Breast epithelium (tissue), 4 donors: ENCODE measurements at regions of chr21 and their contacts with region 1.

Region 1: GRCh38 chr21:41359289-41359688 is 2.5 kb upstream of the MX2 start:
- DNase-seq: peak; percentile 5 to 47
- H3K4me3 ChIP-seq: no peak overlapping the region
- H3K27ac ChIP-seq: no peak overlapping the region
- H3K4me1 ChIP-seq: peaks cover 0 to 6% of the 10 kb centered on the region in 2 donors
- H3K27me3 ChIP-seq: no peaks in the 10 kb centered on the region
- CTCF ChIP-seq: no peak
- POLR2A ChIP-seq: no peak

Region 2: DNA sequence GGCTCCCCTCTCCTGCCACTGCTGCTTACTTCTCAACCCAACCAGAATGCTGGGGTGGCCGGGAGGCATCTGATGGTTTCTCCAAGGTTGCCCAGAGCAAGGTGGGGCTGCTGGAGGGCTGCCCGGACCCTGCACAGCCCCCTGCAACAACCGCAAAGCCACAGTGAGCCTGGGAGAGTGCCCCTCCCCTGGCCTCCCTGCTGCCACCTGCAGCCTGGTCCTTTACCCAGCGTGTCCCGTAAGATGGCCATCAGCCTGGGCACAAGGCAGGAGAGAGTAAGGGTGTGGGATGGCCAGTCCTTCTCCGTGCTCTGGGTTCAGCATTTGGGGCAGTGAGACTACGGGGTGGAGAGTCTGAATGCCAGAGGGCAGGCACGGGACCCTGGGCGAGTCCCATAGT is 19.6 kb after region 1 on chr21:
- intact Hi-C with region 1: loop called (anchors 2 kb)
- DNase-seq: no peak
- H3K4me3 ChIP-seq: no peak overlapping the region
- H3K27ac ChIP-seq: no peak overlapping the region
- H3K4me1 ChIP-seq: no peaks in the 10 kb centered on the region
- H3K27me3 ChIP-seq: no peaks in the 10 kb centered on the region
- CTCF ChIP-seq: no peak
- POLR2A ChIP-seq: no peak